ENCODE measurements at regions of chr5 and their contacts with region 1.

Region 1: GRCh38 chr5:146541958-146542849 is 26.2 kb upstream of the GPR151 start:
- DNase-seq: peak; percentile 73

Region 2: DNA sequence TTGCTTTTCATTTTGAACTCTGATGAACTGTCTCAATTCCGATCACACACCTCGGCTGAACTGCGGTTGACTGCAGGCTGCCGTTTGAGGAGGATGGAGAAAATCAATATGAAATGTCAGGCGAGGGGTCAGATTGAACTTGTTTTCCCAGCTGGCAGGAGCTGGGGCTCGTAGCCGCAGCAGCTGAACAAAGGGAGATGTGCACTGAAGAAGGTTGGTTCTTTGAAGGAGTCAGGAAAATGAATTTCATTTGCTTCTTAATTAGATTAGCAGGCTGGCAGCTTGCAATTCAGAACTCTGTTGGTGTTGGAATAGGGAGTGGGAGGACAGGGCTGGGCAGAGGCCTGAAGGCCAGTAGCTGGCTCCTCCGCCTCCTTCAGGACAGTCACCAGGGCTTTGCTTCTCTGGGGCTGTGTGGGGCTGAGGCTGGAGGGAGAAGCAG is 91.1 kb after region 1 on chr5:
- CTCF ChIA-PET with region 1: interaction called, 10 read pairs
- POLR2A ChIA-PET with region 1: no interaction called
- DNase-seq: no peak

Measured in HEK293T (cell line).